HEK293 (cell line): ENCODE measurements at regions of chr10 and their contacts with region 1.

Region 1: DNA sequence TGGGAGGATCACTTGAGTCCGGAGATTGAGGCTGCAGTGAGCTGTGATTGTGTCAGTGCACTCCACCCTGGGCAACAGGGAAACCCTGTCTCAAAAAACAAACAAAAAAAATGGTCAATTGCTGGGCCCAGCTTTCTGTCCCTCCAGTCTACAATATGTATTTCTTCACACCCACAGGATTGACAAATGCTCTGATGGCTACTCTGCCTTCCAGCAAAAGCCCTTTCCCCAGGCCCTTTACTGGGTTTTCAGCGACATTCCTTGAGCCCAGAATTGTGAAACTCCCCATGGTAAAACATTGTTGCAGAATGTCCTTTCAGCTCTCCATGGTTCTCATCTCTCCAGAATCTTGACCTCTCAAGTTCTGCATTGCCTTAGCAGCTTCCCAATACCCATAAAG is 23.7 kb upstream of the TNKS2 start:
- H3K4me3 ChIP-seq: no peak overlapping the region
- H3K27ac ChIP-seq: no peak overlapping the region
- H3K4me1 ChIP-seq: no peaks in the 10 kb centered on the region
- CTCF ChIP-seq: no peak

Region 2: GRCh38 chr10:91238191-91238590 is 536.4 kb before region 1 on chr10:
- CTCF ChIA-PET with region 1: no interaction called
- POLR2A ChIA-PET with region 1: no interaction called
- H3K4me3 ChIP-seq: no peak overlapping the region
- H3K27ac ChIP-seq: no peak overlapping the region
- H3K4me1 ChIP-seq: no peaks in the 10 kb centered on the region
- CTCF ChIP-seq: no peak

Region 3: DNA sequence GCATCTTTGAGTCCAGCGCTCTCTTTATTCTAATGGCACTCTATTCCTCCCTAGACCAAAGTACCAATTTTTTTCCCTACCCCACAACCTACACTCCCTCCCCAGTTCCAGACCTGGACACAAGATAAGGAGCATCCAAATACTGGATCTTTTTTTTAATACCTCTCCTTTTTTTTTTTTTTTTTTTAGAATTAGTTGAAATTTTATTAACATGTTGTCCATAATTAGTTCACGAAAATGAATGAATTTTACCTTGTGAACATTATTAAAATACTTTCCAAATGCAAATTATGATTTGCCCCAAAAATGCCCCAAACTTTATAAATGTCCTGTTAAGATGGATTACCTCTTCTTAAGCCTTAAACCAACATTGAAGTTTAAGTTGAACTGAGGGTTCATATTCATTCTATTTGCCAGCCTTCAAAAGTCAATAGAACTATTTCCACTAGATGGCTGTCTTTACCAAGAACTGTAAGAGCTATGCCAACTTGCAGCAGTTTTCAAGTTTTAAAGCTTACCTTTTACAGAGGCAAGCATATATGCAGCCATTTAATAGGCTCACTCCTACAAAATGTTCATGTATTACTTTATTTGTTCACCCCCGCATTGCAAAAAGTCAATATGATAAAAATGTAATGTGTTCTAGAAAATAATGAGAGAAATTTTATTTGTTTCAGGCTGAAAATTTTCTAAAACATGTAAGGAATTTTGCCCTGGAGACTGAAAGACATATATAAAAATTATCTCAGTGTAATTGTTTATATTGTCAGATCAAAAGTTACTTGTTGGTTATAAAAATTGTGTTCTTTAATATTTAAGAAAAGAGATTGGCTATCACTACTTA is 16.0 kb before region 1 on chr10:
- CTCF ChIA-PET with region 1: interaction called, 11 read pairs
- POLR2A ChIA-PET with region 1: no interaction called
- H3K4me3 ChIP-seq: no peak overlapping the region
- H3K27ac ChIP-seq: no peak overlapping the region
- H3K4me1 ChIP-seq: no peaks in the 10 kb centered on the region
- CTCF ChIP-seq: no peak

Region 4: DNA sequence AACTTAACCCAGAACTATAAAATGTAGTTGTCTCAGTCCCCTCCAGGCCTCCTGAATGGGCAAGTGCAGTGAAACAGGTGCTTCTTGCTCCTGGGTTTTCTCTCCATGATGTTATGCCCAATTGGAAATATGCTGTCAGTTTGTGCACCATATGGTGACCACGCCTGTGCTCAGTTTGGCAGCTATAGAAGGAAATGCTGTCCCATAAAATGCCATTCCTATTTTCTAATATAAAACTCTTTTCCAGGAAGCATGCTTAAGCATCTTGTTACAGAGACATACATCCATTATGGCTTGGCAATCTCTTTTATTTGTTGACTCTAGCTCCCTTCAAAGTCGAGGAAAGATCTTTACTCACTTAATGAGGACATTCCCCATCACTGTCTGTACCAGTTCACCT is 89.5 kb after region 1 on chr10:
- CTCF ChIA-PET with region 1: no interaction called
- POLR2A ChIA-PET with region 1: no interaction called
- H3K4me3 ChIP-seq: no peak overlapping the region
- H3K27ac ChIP-seq: no peak overlapping the region
- H3K4me1 ChIP-seq: no peaks in the 10 kb centered on the region
- CTCF ChIP-seq: no peak